Activated CD4-positive, alpha-beta T cell treated with anti-CD3 and anti-CD28 coated beads, Interleukin-2, amount 10 ng/mL, durations not matched to agents 24 days and 14 days (primary cell): ENCODE measurements at regions of chr13 and their contacts with region 1.

Region 1: DNA sequence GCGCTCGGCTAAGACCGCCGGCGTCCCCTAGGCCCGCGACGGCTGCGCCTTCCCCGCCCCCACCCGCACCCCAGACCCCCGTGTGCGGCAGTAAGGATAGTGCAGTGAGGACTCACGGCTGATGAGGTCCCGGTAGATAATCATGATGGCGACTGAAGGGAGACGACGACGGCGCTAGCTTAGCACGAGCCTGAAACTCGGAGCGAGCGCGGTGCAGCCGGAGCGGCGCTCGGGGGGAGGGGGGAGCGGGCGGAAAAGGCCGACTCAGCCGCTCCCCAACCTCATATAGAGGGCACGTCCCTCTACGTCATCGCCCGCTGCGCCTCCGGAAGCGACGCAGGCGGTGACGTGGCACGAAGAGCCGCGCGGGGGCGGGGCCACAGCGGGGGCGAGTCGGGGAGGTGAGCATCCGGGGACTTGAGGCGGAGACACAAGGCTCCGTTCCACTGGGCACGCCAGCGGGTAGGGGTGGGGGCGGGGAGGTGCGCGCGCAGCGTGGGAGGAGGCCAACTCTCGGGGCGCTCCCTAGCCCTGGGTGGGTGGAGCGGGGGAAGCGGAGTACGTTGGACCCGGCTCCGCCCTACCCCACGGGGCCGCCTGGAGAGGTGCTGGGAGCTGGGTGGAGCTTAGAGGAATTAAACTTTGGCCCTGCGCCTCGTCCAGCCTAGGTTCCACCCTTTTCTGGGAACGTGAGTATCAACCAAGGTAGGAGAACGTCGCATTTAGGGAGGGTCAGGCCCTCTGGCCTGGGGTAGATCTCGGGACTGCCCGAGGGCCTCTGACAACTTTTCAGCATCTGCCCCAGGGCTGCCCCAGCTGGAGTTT is at the start of gene TPT1:
- DNase-seq: peak; percentile 100
- H3K4me3 Mint-ChIP-seq: peak within 1 kb of the TSS; percentile 99
- H3K27ac Mint-ChIP-seq: peak within 1 kb of the TSS; percentile 99
- H3K4me1 Mint-ChIP-seq: peaks cover 45% of the 10 kb centered on the region
- H3K27me3 Mint-ChIP-seq: no peaks in the 10 kb centered on the region
- total RNA-seq, gene TPT1: 2,188 and 2,224 TPM in 2 replicates

Region 2: DNA sequence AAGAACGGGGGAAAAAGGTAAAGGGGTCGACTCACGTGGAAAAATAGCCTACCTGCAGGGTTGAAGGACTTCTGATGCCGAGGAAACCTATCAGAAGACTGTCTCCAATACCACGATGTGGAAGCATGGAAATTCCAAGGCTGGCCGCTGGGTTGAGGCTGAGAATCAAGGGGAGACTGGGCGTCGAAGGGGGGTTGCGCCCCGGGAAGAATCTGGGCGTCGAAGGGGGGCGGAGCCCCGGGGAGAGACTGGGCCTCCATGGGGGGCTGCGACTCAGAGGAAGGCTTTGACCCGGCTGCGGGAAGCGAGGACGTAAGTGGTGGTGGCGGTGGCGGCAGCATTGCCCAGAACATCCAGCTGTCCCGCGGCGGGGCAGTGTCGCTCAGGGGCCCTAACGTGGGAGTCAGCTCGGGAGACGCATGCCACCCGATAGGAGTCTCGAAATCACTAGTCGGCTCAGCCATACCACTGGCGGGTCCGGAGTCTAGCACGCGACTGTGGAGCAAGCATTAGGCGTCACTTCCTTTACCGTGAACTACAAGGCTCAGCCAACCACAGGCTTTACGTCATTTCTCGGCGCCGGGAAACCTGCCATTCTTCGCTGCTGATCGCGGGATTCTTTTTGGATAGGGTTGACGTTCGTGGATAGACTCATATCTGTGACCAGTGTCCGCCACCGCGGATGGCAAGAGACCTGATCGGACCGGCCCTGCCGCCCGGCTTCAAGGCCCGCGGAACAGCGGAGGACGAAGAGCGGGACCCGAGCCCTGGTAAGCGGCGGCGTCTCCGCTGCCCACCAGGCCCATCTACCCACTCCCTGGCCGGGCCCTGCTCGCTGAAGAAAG is 351.9 kb before region 1 on chr13 and contains the starts of genes GPALPP1 and NUFIP1:
- intact Hi-C with region 1: loop called (anchors 1 kb)
- DNase-seq: peak; percentile 98
- H3K4me3 Mint-ChIP-seq: peak within 1 kb of the TSS; percentile 99
- H3K27ac Mint-ChIP-seq: peak within 1 kb of the TSS; percentile 98
- H3K4me1 Mint-ChIP-seq: peaks cover 46% of the 10 kb centered on the region
- H3K27me3 Mint-ChIP-seq: no peaks in the 10 kb centered on the region
- total RNA-seq, gene GPALPP1: 29.1 and 32.3 TPM in 2 replicates
- total RNA-seq, gene NUFIP1: 13.3 and 13.8 TPM in 2 replicates

Region 3: GRCh38 chr13:45179428-45179827 is 161.7 kb before region 1 on chr13:
- intact Hi-C with region 1: no loop called
- DNase-seq: no peak
- H3K4me3 Mint-ChIP-seq: no peak overlapping the region
- H3K27ac Mint-ChIP-seq: no peak overlapping the region
- H3K4me1 Mint-ChIP-seq: peaks cover 20% of the 10 kb centered on the region
- H3K27me3 Mint-ChIP-seq: no peaks in the 10 kb centered on the region

Region 4: GRCh38 chr13:45310341-45311125 is 30.6 kb before region 1 on chr13:
- intact Hi-C with region 1: loop called (anchors 2 kb)
- DNase-seq: no peak
- H3K4me3 Mint-ChIP-seq: peak overlapping the region; percentile 87
- H3K27ac Mint-ChIP-seq: no peak overlapping the region
- H3K4me1 Mint-ChIP-seq: peaks cover 21% of the 10 kb centered on the region
- H3K27me3 Mint-ChIP-seq: peaks cover 23% of the 10 kb centered on the region

Region 5: GRCh38 chr13:45367358-45367757 is 26.2 kb after region 1 on chr13:
- intact Hi-C with region 1: loop called (anchors 1 kb)
- DNase-seq: peak; percentile 95
- H3K4me3 Mint-ChIP-seq: peak overlapping the region; percentile 76
- H3K27ac Mint-ChIP-seq: peak overlapping the region; percentile 95
- H3K4me1 Mint-ChIP-seq: peaks cover 54% of the 10 kb centered on the region
- H3K27me3 Mint-ChIP-seq: no peaks in the 10 kb centered on the region

Region 6: DNA sequence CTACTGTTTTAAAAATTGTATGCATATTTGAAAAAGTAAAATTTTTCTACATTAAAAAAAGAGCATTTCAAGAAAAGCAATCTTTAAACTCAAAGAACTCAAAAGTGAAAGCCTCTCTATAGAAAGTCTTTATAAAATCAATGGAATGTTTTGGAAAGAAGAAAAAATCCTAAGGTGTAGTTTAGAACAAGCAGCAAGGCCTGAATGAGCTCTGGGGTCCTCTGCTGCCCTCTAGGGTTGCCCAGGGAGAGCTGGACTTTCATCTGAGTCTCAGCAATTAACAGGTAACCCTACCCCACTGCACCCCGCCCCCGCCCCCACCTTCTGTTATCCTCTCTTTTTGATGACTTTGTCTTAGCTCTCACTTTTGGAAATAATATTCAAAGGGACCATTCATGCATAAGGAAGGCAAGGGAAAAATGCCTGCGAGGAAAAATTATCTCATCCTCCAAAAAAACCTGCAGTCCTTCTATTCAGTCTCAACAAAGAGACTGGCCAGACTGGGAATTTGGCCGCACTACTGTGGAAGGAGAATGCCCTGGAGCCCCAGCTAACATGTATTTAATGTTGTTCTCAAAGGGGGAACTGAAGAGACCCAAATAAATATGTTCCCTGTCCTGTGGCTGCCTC is 52.9 kb after region 1 on chr13:
- intact Hi-C with region 1: loop called (anchors 1 kb)
- DNase-seq: peak; percentile 71
- H3K4me3 Mint-ChIP-seq: no peak overlapping the region
- H3K27ac Mint-ChIP-seq: no peak overlapping the region
- H3K4me1 Mint-ChIP-seq: peaks cover 38% of the 10 kb centered on the region
- H3K27me3 Mint-ChIP-seq: no peaks in the 10 kb centered on the region

Region 7: DNA sequence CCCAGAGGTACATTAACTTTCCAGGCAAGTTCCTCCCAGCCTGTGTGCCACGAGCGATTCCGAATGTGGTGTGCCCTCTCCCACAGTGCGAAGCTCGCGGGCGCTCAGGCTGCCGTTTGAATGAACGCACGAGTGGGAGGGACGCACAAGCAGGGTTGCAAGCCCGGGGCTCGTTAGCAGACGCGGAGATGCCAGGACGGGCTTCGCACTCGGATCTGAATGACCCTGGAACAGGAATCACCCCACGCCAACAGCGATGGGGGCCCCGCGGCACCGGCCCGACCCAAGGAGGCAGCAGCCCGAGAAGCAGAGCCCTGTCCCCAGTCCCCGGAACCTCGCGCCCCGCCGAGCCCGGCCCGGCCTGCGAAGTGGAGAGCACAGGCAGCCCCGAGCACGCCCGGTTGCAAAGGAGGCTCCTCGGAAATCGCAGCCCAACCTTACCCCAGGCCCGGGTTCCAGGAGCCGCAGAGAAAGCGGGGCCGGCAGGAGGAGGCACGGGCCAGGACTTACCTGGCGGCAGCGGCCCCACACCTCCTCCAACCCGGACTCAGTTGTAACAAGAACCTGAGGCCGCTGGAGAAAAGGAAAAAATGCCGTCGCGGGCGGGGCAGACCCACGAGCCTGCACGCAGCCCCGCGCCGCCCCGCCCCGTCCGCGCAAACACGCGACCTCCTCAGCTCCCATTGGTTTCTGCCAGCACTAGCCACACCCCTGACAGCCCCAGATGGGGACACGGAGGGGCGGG is 76.8 kb after region 1 on chr13 and contains the start of gene SLC25A30:
- intact Hi-C with region 1: loop called (anchors 1 kb)
- DNase-seq: peak; percentile 96
- H3K4me3 Mint-ChIP-seq: peak within 1 kb of the TSS; percentile 96
- H3K27ac Mint-ChIP-seq: peak within 1 kb of the TSS; percentile 94
- H3K4me1 Mint-ChIP-seq: peaks cover 19% of the 10 kb centered on the region
- H3K27me3 Mint-ChIP-seq: peaks cover 1% of the 10 kb centered on the region
- total RNA-seq, gene SLC25A30: 12.9 and 14.2 TPM in 2 replicates

Region 8: DNA sequence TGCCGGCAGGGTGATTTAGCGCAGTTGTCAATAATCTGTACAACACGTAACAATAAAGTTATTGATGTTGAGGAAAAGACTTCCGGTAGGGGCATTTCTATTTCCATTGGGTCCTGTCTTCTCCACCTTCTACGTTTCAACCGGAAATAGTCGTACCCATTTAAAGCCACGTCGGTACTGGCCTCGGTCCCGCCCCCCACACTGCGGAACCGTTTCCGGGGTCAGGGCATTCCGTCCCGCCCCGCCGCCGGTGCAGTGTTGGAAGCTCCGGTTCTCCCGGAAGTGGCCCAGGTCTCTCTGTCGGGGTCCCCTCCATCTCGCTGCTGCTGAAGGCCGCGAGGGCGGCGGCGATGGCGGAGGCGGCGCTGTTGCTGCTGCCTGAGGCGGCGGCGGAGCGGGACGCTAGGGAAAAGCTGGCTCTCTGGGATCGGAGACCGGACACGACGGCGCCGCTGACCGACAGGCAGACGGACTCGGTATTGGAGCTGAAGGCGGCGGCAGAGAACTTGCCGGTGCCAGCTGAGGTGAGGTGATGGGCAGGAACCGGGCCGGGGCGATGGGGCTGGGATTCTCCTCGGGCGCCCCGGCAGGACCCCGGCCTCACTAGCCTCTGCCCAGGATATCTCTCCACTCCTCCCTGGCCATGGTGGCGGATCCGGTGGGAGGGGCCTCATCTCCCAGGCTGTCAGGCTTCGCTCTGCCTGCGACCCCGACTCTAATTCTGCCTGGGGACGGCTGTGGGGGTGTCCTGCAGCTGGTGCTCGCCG is 123.7 kb after region 1 on chr13 and contains the start of gene COG3:
- intact Hi-C with region 1: loop called (anchors 1 kb)
- DNase-seq: peak; percentile 99
- H3K4me3 Mint-ChIP-seq: peak within 1 kb of the TSS; percentile 91
- H3K27ac Mint-ChIP-seq: peak within 1 kb of the TSS; percentile 86
- H3K4me1 Mint-ChIP-seq: peaks cover 37% of the 10 kb centered on the region
- H3K27me3 Mint-ChIP-seq: peaks cover 2% of the 10 kb centered on the region
- total RNA-seq, gene COG3: 20.1 and 20.7 TPM in 2 replicates